Upper lobe of right lung (tissue), 1 donor: ENCODE measurements at regions of chr20 and their contacts with region 1.

Region 1: GRCh38 chr20:25407311-25408169 is at the start of gene GINS1:
- DNase-seq: peak; percentile 92
- ATAC-seq: peak; percentile 98
- H3K4me3 ChIP-seq: peak within 1 kb of the TSS; percentile 78
- H3K27ac ChIP-seq: peak within 1 kb of the TSS; percentile 19
- H3K4me1 ChIP-seq: peaks cover 8% of the 10 kb centered on the region
- H3K27me3 ChIP-seq: no peaks in the 10 kb centered on the region
- CTCF ChIP-seq: no peak
- total RNA-seq, gene GINS1: 0.55 TPM

Region 2: GRCh38 chr20:25065625-25066338 is 341.8 kb before region 1 on chr20:
- intact Hi-C with region 1: loop called (anchors 10 kb)
- DNase-seq: peak; percentile 67
- ATAC-seq: peak; percentile 86
- H3K4me3 ChIP-seq: no peak overlapping the region
- H3K27ac ChIP-seq: no peak overlapping the region
- H3K4me1 ChIP-seq: no peaks in the 10 kb centered on the region
- H3K27me3 ChIP-seq: peaks cover 18% of the 10 kb centered on the region
- CTCF ChIP-seq: peak; percentile 84

Region 3: DNA sequence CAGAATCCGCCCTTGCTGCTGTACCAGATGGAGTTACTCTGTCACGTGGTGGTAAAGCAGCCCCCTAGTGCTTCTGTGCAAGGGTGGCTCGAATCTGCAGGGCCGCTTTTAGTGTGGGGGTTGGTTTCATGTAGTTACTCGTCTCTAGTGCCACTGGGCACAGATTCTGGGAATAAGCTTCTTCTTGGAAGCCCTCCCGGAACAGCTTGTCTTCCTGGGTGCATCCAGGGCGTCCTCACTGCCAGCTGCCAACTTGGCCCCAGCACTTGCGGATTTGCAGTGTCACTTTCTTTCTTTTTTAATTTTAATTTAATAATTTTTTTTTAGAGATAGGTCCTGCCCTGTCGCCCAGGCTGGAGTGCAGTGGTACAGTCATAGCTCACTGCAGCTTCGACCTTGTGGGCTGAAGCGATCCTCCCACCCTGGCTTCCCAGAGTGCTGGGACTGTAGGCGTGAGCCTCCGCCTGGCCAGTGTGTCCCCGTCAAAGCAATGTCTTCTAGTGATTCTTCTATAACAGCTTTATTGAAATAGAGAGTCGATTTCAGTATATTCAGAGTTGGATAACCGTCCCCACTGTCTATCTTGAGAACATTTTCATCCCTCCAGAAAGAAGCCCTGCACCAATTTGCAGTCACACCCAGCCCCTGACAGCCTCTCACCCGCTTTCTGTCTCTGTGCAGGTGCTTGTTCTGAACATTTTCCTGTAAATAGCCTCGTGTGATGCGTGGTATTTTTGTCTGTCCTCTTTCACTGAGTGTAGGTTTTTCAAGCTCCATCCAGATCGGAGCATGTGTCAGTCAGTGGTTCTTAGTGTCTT is 133.8 kb before region 1 on chr20:
- intact Hi-C with region 1: no loop called
- DNase-seq: peak; percentile 46
- ATAC-seq: no peak
- H3K4me3 ChIP-seq: no peak overlapping the region
- H3K27ac ChIP-seq: no peak overlapping the region
- H3K4me1 ChIP-seq: no peaks in the 10 kb centered on the region
- H3K27me3 ChIP-seq: no peaks in the 10 kb centered on the region
- CTCF ChIP-seq: no peak

Region 4: DNA sequence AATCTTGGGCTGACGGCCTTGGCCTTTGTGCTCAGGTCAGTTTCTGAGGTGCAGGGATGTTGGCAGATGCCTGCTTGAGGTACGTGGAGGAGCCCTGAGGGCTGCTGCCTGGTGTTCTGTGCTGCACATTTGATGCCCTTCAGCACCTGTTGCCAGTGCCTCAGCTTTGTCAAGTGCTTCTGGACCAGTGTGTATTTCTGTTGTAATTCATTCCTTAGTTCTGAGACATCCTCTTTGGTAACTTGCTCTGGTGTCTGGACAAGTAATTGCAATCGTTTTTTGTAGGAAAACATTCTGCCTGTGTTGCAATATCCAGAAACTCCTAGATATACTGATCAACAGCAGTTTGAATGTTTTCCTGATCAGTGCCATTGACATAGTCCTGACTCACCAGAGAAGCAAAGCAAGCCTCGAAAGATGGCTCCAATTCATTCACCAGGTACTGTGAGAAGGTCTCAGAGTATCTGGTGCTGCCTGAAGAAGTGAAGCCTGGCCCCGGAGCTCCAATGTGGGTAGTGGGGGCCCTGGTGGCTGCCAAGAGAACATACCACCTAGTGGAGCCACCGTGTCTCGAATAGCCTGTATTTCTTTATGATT is 262.4 kb after region 1 on chr20:
- intact Hi-C with region 1: no loop called
- DNase-seq: no peak
- ATAC-seq: no peak
- H3K4me3 ChIP-seq: no peak overlapping the region
- H3K27ac ChIP-seq: no peak overlapping the region
- H3K4me1 ChIP-seq: no peaks in the 10 kb centered on the region
- H3K27me3 ChIP-seq: no peaks in the 10 kb centered on the region
- CTCF ChIP-seq: no peak